HepG2 (cell line): ENCODE measurements at regions of chr12 and their contacts with region 1.

Region 1: GRCh38 chr12:120116792-120117651 is 469 bp upstream of the RAB35 start:
- DNase-seq: peak; percentile 86
- ATAC-seq: peak; percentile 76
- H3K4me3 ChIP-seq: peak overlapping the region; percentile 70 to 99 (median 93)
- H3K27ac ChIP-seq: peak overlapping the region; percentile 92
- H3K4me1 ChIP-seq: peaks cover 68% of the 10 kb centered on the region
- H3K27me3 ChIP-seq: no peaks in the 10 kb centered on the region; a peak in 1 of 5 replicates
- CTCF ChIP-seq: no peak
- EP300 ChIP-seq: peak in 1 of 2 experiments; percentile 46; a peak in 1 of 4 replicates
- POLR2A ChIP-seq: peak in 1 of 2 experiments; percentile 93; a peak in 2 of 4 replicates
- RAD21 ChIP-seq: no peak; the same call in 1 of the 2 replicates

Region 2: DNA sequence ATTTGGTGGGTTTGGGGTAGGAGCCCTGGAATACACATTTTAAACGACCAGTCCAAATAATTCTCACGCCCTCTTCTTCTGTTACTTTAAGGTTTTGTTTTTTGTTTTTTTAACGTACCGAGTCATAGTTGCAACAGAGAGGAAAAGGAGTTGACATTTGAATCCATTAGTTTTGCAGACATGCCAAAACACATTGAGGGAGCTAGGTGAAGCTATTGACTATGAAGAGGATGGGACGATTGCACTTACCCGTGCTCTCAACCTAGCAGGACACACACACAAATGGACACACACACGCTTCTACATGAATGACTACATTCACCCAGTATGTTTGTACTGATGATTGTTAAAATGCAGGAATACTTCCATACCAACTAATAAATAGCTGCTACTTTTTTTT is 185.6 kb before region 1 on chr12:
- CTCF ChIA-PET with region 1: no interaction called
- POLR2A ChIA-PET with region 1: no interaction called
- in situ Hi-C with region 1: no loop called
- intact Hi-C with region 1: no loop called
- DNase-seq: no peak
- ATAC-seq: no peak
- H3K4me3 ChIP-seq: no peak overlapping the region
- H3K27ac ChIP-seq: no peak overlapping the region
- H3K4me1 ChIP-seq: no peaks in the 10 kb centered on the region
- H3K27me3 ChIP-seq: peaks cover 0 to 8% of the 10 kb centered on the region in 2 experiments; a peak in 2 of 5 replicates
- CTCF ChIP-seq: no peak
- EP300 ChIP-seq: no peak
- POLR2A ChIP-seq: no peak
- RAD21 ChIP-seq: no peak

Region 3: GRCh38 chr12:120156315-120157259 is 39.6 kb after region 1 on chr12:
- CTCF ChIA-PET with region 1: no interaction called
- POLR2A ChIA-PET with region 1: no interaction called
- in situ Hi-C with region 1: no loop called
- intact Hi-C with region 1: no loop called
- DNase-seq: no peak
- ATAC-seq: no peak
- H3K4me3 ChIP-seq: no peak overlapping the region
- H3K27ac ChIP-seq: no peak overlapping the region
- H3K4me1 ChIP-seq: peaks cover 9% of the 10 kb centered on the region; the same call in 1 of the 2 replicates
- H3K27me3 ChIP-seq: no peaks in the 10 kb centered on the region
- CTCF ChIP-seq: no peak
- EP300 ChIP-seq: no peak
- POLR2A ChIP-seq: no peak
- RAD21 ChIP-seq: no peak

Region 4: GRCh38 chr12:120181991-120182631 is 65.1 kb after region 1 on chr12:
- CTCF ChIA-PET with region 1: no interaction called
- POLR2A ChIA-PET with region 1: interaction called, 5 read pairs
- in situ Hi-C with region 1: no loop called
- intact Hi-C with region 1: loop called (anchors 10 kb)
- DNase-seq: peak; percentile 63
- ATAC-seq: peak; percentile 89
- H3K4me3 ChIP-seq: no peak overlapping the region
- H3K27ac ChIP-seq: peak overlapping the region; percentile 54
- H3K4me1 ChIP-seq: peaks cover 36% of the 10 kb centered on the region
- H3K27me3 ChIP-seq: no peaks in the 10 kb centered on the region
- CTCF ChIP-seq: no peak
- EP300 ChIP-seq: no peak
- POLR2A ChIP-seq: no peak
- RAD21 ChIP-seq: no peak

Region 5: GRCh38 chr12:120342156-120342555 is 225.1 kb after region 1 on chr12:
- CTCF ChIA-PET with region 1: no interaction called
- POLR2A ChIA-PET with region 1: no interaction called
- in situ Hi-C with region 1: no loop called
- intact Hi-C with region 1: no loop called
- DNase-seq: no peak
- ATAC-seq: peak; percentile 84
- H3K4me3 ChIP-seq: peak overlapping the region; percentile 6 to 48 (median 16); a peak in 3 of 6 replicates
- H3K27ac ChIP-seq: no peak overlapping the region
- H3K4me1 ChIP-seq: peaks cover 34% of the 10 kb centered on the region
- H3K27me3 ChIP-seq: no peaks in the 10 kb centered on the region
- CTCF ChIP-seq: 0 out of 2 replicates have a peak, but pooled peaks have one; percentile 30
- EP300 ChIP-seq: no peak
- POLR2A ChIP-seq: no peak
- RAD21 ChIP-seq: no peak